ENCODE measurements at regions of chr12 and their contacts with region 1.

Region 1: DNA sequence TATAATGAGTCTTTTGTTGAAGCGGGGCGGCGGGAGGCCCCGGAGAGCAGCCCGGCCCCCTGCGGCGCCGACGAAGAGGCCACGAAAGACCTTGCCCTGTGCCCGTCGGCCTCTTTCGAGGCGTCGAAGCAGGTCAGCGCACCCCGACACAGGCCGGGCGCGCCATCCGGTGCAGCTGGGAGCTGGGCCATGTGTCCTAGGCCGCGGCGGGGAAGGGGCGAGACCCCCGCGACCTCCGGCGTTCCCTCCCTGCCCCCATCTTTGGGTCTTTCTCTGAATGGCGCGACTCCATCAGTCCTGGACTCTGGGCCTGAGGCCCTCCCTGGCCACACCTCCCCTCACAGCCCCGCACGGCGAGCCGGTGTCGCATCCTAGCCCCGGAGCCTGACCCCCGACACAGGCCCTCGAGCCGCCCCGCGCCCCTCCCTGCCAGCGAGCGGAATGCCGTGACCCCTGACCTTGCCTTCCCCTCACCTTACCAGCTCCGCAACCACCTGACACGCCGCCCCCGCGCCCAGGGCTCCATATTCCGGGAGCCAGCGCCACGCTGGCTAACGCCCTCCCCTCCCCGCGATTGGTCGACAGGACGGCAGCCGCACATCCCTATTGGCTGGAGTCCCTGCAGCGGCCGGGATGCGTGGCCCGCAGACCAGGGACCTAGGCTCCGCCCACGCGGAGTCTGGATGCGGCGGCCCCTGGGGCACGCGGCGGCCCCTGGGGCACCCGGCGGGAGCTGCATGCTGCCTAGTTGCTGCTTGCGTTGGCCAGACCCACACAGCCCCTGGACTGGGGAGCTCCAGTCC is at the start of gene SLC11A2:
- DNase-seq: peak; percentile 72
- ATAC-seq: peak; percentile 97
- H3K4me3 ChIP-seq: peak within 1 kb of the TSS; percentile 71 to 80
- H3K27ac ChIP-seq: peak within 1 kb of the TSS; percentile 90
- H3K4me1 ChIP-seq: peaks cover 17% of the 10 kb centered on the region
- H3K27me3 ChIP-seq: no peaks in the 10 kb centered on the region
- CTCF ChIP-seq: no peak
- total RNA-seq, gene SLC11A2: 59.9 TPM

Region 2: GRCh38 chr12:50665139-50665538 is 360.9 kb before region 1 on chr12:
- CTCF ChIA-PET with region 1: no interaction called
- POLR2A ChIA-PET with region 1: interaction called, 12 read pairs
- in situ Hi-C with region 1: no loop called
- intact Hi-C with region 1: no loop called
- DNase-seq: no peak
- ATAC-seq: no peak
- H3K4me3 ChIP-seq: no peak overlapping the region
- H3K27ac ChIP-seq: no peak overlapping the region
- H3K4me1 ChIP-seq: no peaks in the 10 kb centered on the region; the same call in 1 of the 2 replicates
- H3K27me3 ChIP-seq: no peaks in the 10 kb centered on the region
- CTCF ChIP-seq: no peak

Region 3: GRCh38 chr12:50825372-50825838 is 200.6 kb before region 1 on chr12:
- CTCF ChIA-PET with region 1: interaction called, 11 read pairs
- POLR2A ChIA-PET with region 1: no interaction called
- in situ Hi-C with region 1: no loop called
- intact Hi-C with region 1: loop called (anchors 5 kb)
- DNase-seq: peak; percentile 41
- ATAC-seq: peak; percentile 78
- H3K4me3 ChIP-seq: no peak overlapping the region
- H3K27ac ChIP-seq: peak overlapping the region; percentile 63; the same call in 1 of the 2 replicates
- H3K4me1 ChIP-seq: no peaks in the 10 kb centered on the region; the same call in 1 of the 2 replicates
- H3K27me3 ChIP-seq: no peaks in the 10 kb centered on the region
- CTCF ChIP-seq: peak; percentile 69

Region 4: GRCh38 chr12:51829011-51829481 is 803.0 kb after region 1 on chr12:
- CTCF ChIA-PET with region 1: no interaction called
- POLR2A ChIA-PET with region 1: interaction called, 16 read pairs
- in situ Hi-C with region 1: no loop called
- intact Hi-C with region 1: no loop called
- DNase-seq: no peak
- ATAC-seq: no peak
- H3K4me3 ChIP-seq: no peak overlapping the region
- H3K27ac ChIP-seq: no peak overlapping the region
- H3K4me1 ChIP-seq: no peaks in the 10 kb centered on the region
- H3K27me3 ChIP-seq: peaks cover 3% of the 10 kb centered on the region; the same call in 1 of the 2 replicates
- CTCF ChIP-seq: no peak

Measured in Panc1 (cell line).